BJ (cell line): ENCODE measurements at regions of chr14 and their contacts with region 1.

Region 1: GRCh38 chr14:65260786-65261185 is 151.7 kb upstream of the FUT8 start:
- DNase-seq: no peak
- H3K4me3 ChIP-seq: no peak overlapping the region
- H3K27me3 ChIP-seq: no peaks in the 10 kb centered on the region
- CTCF ChIP-seq: no peak

Region 2: GRCh38 chr14:65179918-65180724 is 80.7 kb before region 1 on chr14:
- CTCF ChIA-PET with region 1: no interaction called
- POLR2A ChIA-PET with region 1: no interaction called
- DNase-seq: no peak
- H3K4me3 ChIP-seq: no peak overlapping the region
- H3K27me3 ChIP-seq: no peaks in the 10 kb centered on the region; the same call in 1 of the 2 replicates
- CTCF ChIP-seq: no peak

Region 3: DNA sequence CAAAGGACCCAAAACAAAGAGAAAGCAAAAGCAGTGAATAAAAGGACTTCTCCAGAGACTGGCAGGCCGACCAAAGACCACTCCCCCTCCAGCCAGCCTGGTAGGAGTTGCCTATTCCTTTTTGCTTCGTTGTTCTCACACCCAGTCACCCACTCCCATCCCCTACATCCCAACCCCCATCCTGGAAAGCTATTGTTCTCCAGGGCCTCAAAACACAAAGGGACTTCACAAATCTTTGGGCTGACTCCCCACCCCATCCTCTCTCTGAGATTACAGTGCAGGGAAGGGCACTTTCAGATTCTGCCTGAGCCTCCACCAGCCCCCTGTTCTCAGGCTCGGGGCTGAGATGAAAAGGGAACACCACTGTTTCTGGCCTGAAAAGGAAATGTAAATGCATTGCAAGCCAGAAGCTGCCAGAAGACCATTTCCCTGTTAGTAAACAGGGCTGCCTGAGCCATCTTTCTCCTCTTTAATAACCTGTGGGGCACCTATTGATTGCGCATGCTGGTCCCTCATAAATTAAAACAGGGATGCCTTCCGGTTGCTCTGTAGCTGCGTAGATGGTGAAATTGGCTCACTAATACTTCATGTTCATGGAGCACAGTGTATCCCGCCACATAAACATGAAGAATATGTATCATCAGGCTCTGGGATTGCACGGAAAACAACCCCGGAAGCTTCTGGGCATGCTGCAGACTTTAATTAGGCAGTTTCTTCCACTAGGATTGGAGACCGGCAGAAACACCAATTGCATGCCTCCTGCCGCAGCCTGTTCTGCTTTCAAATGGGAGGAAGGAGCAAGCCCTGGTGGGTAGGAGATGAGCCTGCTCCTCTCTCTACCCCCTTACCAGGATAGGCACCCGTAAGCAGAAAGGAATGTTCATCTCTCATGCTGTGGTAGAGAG is 21.5 kb after region 1 on chr14:
- CTCF ChIA-PET with region 1: interaction called, 6 read pairs
- POLR2A ChIA-PET with region 1: interaction called, 12 read pairs
- DNase-seq: peak; percentile 52
- H3K4me3 ChIP-seq: no peak overlapping the region
- H3K27me3 ChIP-seq: no peaks in the 10 kb centered on the region
- CTCF ChIP-seq: 0 out of 2 replicates have a peak, but pooled peaks have one; percentile 2

Region 4: DNA sequence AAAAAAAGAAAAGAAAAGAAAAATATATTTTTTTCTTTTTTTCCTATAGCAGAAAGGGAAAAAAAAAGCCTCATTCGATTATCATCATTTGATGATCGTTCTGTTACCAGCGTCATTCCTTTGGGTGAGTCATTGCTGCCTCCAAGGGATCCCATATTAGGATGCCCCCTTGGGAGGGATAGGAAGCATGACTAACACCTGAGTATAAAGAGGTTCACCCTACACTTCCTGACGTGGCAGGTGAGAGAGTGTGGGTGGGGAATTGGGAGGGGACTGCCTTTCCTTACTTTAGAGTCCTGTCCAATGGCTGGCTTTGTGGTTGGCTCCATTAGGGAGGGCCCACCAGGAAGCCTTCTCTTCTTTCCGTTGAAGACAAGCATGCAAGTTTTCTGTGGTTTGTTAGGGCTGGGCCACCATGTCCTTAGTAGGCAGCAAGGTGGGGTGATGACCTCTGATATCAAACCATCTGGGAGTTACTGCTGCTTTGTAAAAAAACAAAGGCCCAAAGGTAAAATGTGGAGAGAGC is 95.6 kb after region 1 on chr14:
- CTCF ChIA-PET with region 1: no interaction called
- POLR2A ChIA-PET with region 1: no interaction called
- DNase-seq: peak; percentile 48
- H3K4me3 ChIP-seq: no peak overlapping the region
- H3K27me3 ChIP-seq: no peaks in the 10 kb centered on the region
- CTCF ChIP-seq: no peak